IMR-90 (cell line): ENCODE measurements at regions of chr11 and their contacts with region 1.

Region 1: GRCh38 chr11:59429924-59430516 is 3.8 kb upstream of the OR5A2 start:
- DNase-seq: peak; percentile 45
- ATAC-seq: peak; percentile 75
- H3K4me3 ChIP-seq: no peak overlapping the region
- H3K27ac ChIP-seq: no peak overlapping the region
- H3K4me1 ChIP-seq: no peaks in the 10 kb centered on the region
- H3K27me3 ChIP-seq: no peaks in the 10 kb centered on the region; the same call in 1 of the 2 replicates
- CTCF ChIP-seq: peak; percentile 74
- POLR2A ChIP-seq: no peak
- RAD21 ChIP-seq: peak; percentile 65

Region 2: GRCh38 chr11:59197991-59198390 is 232.0 kb before region 1 on chr11:
- CTCF ChIA-PET with region 1: no interaction called
- POLR2A ChIA-PET with region 1: no interaction called
- dilution Hi-C with region 1: no loop called
- in situ Hi-C with region 1: no loop called
- intact Hi-C with region 1: no loop called
- DNase-seq: peak; percentile 68
- ATAC-seq: peak; percentile 87
- H3K4me3 ChIP-seq: no peak overlapping the region
- H3K27ac ChIP-seq: no peak overlapping the region
- H3K4me1 ChIP-seq: peaks cover 4% of the 10 kb centered on the region; the same call in 1 of the 2 replicates
- H3K27me3 ChIP-seq: no peaks in the 10 kb centered on the region
- CTCF ChIP-seq: no peak
- POLR2A ChIP-seq: no peak
- RAD21 ChIP-seq: no peak

Region 3: DNA sequence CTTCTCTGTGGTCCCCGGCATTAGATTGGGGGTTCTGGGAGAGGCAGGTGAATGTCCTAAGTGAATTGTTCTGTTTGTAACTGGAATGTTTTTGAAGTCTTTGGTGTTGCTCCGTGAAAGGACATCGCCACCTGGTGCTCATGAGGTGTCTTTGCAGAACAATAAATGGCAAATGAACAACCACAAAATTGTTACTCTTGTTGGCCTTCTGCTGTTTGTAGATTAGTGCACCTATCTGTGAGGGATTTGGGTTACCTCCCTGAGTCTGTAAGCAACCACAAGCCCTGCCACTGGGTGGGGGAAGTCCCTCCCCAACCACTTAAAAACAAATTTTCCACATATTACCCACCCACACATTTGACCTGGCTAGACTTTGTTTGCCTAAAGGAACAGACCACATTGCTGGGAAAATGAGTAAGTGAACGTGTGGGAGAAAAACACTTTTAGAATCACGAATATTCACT is 222.0 kb before region 1 on chr11:
- CTCF ChIA-PET with region 1: no interaction called
- POLR2A ChIA-PET with region 1: no interaction called
- dilution Hi-C with region 1: no loop called
- in situ Hi-C with region 1: no loop called
- intact Hi-C with region 1: loop called (anchors 2 kb)
- DNase-seq: peak; percentile 91
- ATAC-seq: peak; percentile 62
- H3K4me3 ChIP-seq: no peak overlapping the region
- H3K27ac ChIP-seq: no peak overlapping the region
- H3K4me1 ChIP-seq: peaks cover 13% of the 10 kb centered on the region
- H3K27me3 ChIP-seq: peaks cover 9% of the 10 kb centered on the region
- CTCF ChIP-seq: peak; percentile 70
- POLR2A ChIP-seq: no peak
- RAD21 ChIP-seq: peak; percentile 74

Region 4: DNA sequence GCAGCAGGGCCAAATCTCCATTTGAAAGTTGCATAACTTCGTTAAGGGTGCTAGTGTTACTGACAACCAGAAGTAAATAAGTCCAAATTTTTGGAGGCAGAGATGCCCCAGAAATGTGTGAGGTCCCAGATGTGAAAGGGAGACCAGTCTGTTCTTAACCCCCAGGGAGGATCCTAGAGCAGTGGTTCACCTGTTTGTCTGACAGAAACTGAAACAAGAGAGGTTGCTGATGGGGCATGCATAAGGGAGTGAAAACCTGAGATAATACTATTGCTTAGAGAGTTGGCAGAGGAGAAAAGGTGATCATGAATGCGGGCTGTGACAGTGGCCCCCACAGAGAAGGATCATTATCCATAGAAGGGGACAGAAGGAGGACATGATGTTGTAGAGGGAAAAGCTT is 411.5 kb after region 1 on chr11:
- CTCF ChIA-PET with region 1: no interaction called
- POLR2A ChIA-PET with region 1: no interaction called
- dilution Hi-C with region 1: no loop called
- in situ Hi-C with region 1: no loop called
- intact Hi-C with region 1: no loop called
- DNase-seq: no peak
- ATAC-seq: no peak
- H3K4me3 ChIP-seq: no peak overlapping the region
- H3K27ac ChIP-seq: no peak overlapping the region
- H3K4me1 ChIP-seq: no peaks in the 10 kb centered on the region
- H3K27me3 ChIP-seq: no peaks in the 10 kb centered on the region; the same call in 1 of the 2 replicates
- CTCF ChIP-seq: no peak
- POLR2A ChIP-seq: no peak
- RAD21 ChIP-seq: no peak